Thyroid gland (tissue), 4 donors: ENCODE measurements at regions of chr18 and their contacts with region 1.

Region 1: DNA sequence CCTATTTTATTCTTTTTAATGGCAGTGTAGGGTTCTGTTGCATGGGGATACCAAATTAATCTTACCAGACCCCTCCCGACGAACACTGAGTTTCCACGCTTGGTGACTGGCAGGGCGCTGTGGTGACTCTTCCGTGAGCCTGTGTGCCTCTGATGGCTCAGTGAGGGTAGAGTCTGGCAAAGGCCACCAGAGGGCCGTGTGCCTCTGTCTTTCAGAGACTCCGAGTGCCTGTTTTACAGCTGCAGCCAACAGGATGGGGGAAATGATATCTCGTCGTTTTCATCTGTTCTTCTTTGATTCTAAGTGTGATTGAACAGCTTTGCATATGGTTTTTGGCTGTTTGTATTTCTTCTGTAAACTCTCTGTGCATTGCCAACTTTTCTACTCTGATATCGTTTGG is 99.8 kb downstream of the ZNF236 start:
- DNase-seq: peak; percentile 59 to 71
- H3K4me3 ChIP-seq: no peak overlapping the region
- H3K27ac ChIP-seq: no peak overlapping the region
- H3K4me1 ChIP-seq: no peaks in the 10 kb centered on the region
- H3K27me3 ChIP-seq: no peaks in the 10 kb centered on the region
- CTCF ChIP-seq: peak in 5 of 6 experiments; percentile 23 to 81 (median 71)
- POLR2A ChIP-seq: no peak

Region 2: DNA sequence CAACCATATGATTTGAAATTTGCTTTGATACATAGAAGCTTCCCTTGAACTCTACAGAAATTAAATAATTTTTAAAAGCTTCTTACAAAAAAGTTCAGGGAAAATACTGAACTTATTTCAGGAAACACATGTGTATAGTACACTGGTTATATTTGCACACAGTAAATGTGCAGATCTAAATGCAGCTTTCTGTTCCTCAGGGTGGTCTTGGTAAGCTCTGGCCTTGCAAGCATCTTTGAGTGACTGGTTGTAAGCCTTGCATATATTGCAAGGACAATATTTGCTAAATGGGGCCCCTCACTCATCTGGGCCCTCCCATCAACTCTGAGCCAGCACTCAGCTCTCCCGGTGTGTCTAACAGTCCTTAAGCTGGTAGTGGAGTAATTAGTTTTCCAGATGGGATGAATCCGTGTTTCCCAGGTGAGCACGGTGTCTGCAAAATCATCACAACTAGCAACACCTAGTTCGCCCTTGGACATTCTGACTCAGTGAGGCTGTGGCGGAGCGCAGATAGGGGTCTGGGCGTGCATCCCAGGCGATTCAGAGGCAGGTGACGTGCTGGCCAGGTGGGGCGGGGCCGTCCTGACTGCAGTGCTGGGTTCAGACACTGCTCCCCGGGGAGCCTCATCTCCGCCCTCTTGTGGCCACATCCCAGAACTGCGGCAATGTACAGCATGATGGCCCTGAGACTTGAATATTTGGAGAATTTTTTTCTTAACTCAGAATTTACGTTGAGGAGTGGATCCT is 60.9 kb after region 1 on chr18:
- intact Hi-C with region 1: loop called (anchors 5 kb)
- DNase-seq: peak; percentile 89 to 92
- H3K4me3 ChIP-seq: no peak overlapping the region
- H3K27ac ChIP-seq: no peak overlapping the region
- H3K4me1 ChIP-seq: peaks cover 34 to 35% of the 10 kb centered on the region in 2 donors
- H3K27me3 ChIP-seq: no peaks in the 10 kb centered on the region
- CTCF ChIP-seq: peak; percentile 84 to 95 (median 86)
- POLR2A ChIP-seq: no peak

Region 3: DNA sequence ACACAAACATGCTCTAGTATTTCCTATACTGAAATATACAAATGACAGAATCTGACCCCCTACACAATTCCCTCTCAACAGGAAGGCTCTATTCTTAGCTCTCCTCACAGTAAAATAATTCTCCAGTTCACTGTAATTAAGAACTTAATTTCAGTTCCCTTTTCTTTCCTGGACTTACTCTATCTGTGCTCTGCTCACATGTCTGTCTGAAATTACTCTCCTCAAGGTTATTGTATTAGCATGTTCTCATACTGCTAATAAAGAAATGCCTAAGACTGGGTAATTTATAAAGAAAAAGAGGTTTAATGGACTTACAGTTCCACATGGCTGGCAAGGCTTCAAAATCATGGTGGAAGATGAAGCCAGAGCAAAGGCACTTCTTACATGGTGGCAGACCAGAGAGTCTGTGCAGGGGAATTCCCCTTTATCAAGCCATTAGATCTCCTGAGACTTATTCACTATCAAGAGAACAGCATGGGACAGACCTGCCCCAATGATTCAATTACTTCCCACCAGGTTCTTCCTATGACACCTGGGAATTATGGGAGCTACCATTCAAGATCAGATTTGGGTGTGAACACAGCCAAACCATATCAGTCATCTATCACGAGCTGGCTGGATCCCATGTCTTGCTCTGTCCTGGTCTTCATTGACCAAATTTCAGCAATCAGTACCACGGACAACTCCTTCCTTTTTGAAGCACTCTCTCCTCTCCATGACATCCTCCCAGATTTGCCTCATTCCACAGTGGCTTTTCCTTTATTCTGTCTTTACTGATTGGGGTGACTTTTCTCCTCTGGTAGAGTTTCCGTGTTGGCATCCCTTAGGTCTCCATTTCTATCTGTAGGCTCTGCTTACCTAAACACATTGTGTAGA is 438.4 kb after region 1 on chr18:
- intact Hi-C with region 1: no loop called
- DNase-seq: no peak
- H3K4me3 ChIP-seq: no peak overlapping the region
- H3K27ac ChIP-seq: no peak overlapping the region
- H3K4me1 ChIP-seq: no peaks in the 10 kb centered on the region
- H3K27me3 ChIP-seq: no peaks in the 10 kb centered on the region
- CTCF ChIP-seq: no peak
- POLR2A ChIP-seq: no peak